AG04449 (cell line): ENCODE measurements at regions of chr20 and their contacts with region 1.

Region 1: DNA sequence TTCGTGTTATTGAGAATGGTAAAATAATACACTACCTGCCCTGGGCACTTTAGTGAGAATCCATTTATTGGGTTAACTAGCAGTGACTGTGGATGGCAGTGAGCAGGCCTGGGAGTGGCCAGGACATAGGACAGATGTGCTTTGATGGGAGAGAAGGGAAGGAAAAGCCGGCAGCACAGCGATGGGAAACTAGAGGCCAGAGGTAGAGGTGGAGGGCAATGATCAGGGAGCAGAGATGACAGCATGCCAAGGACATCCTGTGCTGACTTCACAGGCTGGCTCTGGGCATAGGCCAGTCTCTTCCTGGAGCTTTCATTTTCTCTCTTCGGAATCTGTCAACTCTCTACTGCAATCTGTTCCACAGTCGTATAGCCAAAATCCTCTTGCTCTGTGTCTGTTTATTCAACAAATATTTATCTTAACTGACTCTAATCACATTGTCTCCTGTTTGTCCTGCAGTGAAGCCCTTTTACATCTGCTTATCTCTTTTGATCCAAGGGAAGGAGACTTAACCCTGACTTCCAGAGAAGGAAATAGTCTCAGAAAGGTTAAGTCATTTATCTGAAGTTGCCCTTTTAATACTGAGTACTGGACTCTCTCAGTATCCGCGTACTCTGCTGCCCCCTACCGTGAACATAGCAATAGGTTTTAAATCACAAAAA is 18.4 kb upstream of the MMP24 start:
- DNase-seq: peak; percentile 10
- H3K4me3 ChIP-seq: no peak overlapping the region; the same call in 1 of the 2 replicates
- CTCF ChIP-seq: peak; percentile 60

Region 2: GRCh38 chr20:35063168-35063567 is 144.9 kb before region 1 on chr20:
- CTCF ChIA-PET with region 1: no interaction called
- POLR2A ChIA-PET with region 1: no interaction called
- DNase-seq: no peak
- H3K4me3 ChIP-seq: no peak overlapping the region
- CTCF ChIP-seq: no peak

Region 3: DNA sequence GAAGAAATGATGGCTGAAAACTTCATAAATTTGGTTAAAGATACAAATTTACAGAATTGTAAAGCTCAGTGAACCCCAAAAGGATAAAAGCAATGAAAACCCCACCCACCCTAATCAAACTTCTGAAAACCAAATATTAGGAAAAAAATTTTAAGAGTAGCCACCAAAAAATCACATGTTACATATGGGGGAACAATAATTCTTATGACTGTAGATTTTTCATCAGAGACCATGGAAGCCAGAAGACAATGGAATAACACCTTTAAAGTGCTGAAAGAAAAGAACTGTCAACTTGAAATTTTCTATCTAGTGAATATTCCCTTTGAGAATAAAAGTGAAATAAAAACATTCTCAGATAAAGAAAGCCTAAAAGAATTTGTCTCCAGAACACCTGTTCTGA is 11.8 kb before region 1 on chr20:
- CTCF ChIA-PET with region 1: interaction called, 18 read pairs
- POLR2A ChIA-PET with region 1: no interaction called
- DNase-seq: no peak
- H3K4me3 ChIP-seq: no peak overlapping the region
- CTCF ChIP-seq: no peak

Region 4: DNA sequence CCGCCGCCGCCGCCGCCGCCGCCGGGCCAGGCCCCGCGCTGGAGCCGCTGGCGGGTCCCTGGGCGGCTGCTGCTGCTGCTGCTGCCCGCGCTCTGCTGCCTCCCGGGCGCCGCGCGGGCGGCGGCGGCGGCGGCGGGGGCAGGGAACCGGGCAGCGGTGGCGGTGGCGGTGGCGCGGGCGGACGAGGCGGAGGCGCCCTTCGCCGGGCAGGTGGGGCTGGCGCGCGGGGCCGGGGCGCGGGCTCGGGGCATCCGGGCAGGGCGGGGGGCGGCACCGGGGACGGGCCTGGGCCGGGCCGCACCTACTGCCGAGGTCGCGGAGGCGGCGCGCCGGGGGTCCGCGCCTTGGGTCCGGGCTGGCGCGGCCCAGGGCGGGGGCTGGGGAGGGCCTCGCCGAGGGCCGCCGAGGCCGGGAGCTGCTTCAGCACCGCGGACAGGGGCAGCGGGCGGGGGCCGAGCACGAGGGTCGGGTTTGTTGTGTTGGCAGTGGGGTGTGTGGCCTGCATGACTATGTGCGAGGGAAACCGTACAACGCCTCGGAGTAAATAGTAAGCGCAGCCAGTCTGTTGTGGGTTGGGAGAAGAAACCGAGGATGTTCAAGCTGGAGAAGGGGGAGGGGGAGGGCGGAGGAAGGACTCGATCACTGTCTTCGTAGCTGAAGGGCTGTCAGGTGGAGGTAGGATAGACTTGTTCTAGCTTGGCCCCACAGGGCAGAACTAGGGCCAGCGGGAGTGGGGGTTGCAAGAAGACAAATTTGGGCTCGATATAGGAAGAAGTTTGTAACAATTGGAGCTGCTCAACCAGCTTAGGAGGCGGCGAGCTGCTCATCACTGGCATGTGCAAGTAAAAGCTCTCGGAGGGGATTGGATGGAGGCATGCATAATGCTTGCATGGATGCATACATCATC is 18.9 kb after region 1 on chr20:
- CTCF ChIA-PET with region 1: interaction called, 11 read pairs
- POLR2A ChIA-PET with region 1: no interaction called
- DNase-seq: no peak
- H3K4me3 ChIP-seq: peak overlapping the region; percentile 41
- CTCF ChIP-seq: no peak

Region 5: DNA sequence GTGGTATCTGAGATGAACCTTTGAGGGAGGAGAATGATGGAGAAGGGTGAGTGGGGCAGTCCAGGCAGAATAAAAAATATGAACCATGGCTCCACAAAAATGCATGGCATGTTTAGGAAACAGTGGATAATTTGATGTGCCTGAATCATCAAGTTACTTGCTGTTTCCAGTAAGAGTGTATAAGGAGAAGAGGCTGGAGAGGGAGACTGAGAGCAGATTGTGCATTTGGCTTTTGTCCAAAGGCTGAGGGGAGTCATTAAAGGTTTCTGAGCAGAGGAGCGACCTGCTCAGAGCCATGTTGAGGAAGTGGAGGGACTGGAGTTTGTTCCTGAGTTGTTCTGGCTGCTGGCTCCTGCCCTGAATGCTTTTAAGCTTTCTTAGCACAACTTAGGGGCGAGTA is 24.5 kb after region 1 on chr20:
- CTCF ChIA-PET with region 1: interaction called, 11 read pairs
- POLR2A ChIA-PET with region 1: no interaction called
- DNase-seq: peak; percentile 70
- H3K4me3 ChIP-seq: no peak overlapping the region
- CTCF ChIP-seq: no peak

Region 6: GRCh38 chr20:35269055-35269781 is 61.1 kb after region 1 on chr20:
- CTCF ChIA-PET with region 1: interaction called, 12 read pairs
- POLR2A ChIA-PET with region 1: no interaction called
- DNase-seq: no peak
- H3K4me3 ChIP-seq: no peak overlapping the region
- CTCF ChIP-seq: peak; percentile 95